Dendritic cell treated with granulocyte-macrophage colony-stimulating factor and Interleukin-4, amounts not matched to agents 40 ng/mL and 50 ng/mL, for 4 days (primary cell): ENCODE measurements at regions of chr2 and their contacts with region 1.

Region 1: GRCh38 chr2:27489498-27490397 is at the start of gene IFT172:
- H3K4me3 Mint-ChIP-seq: peak within 1 kb of the TSS; percentile 80
- H3K27ac Mint-ChIP-seq: peak within 1 kb of the TSS; percentile 76
- H3K4me1 Mint-ChIP-seq: peaks cover 28% of the 10 kb centered on the region
- H3K27me3 Mint-ChIP-seq: peaks cover 26% of the 10 kb centered on the region

Region 2: DNA sequence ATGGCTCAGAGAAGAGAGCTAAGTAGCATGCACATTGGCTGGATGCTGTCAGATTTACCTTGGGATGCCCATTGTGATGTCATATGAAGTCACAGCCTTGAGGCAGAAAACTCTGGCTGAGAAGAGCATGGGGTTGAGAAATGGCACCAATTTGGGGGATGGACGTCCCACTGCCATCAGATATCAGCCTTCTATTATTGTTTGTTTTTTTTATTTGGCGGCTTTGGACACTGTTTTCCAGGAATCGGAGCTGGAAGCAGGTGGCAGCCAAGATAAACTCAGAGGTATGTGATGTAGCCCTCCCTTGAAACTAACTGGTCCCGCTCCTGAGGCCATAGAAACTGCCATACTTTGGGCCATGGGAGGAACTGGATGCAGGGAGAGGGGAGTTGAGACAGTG is 47.5 kb after region 1 on chr2:
- intact Hi-C with region 1: no loop called
- H3K4me3 Mint-ChIP-seq: no peak overlapping the region
- H3K27ac Mint-ChIP-seq: no peak overlapping the region
- H3K4me1 Mint-ChIP-seq: no peaks in the 10 kb centered on the region
- H3K27me3 Mint-ChIP-seq: peaks cover 8% of the 10 kb centered on the region

Region 3: GRCh38 chr2:27582695-27583389 is 93.1 kb after region 1 on chr2 and contains the start of gene ZNF512:
- intact Hi-C with region 1: loop called (anchors 2 kb)
- H3K4me3 Mint-ChIP-seq: peak within 1 kb of the TSS; percentile 93
- H3K27ac Mint-ChIP-seq: peak within 1 kb of the TSS; percentile 91
- H3K4me1 Mint-ChIP-seq: peaks cover 42% of the 10 kb centered on the region
- H3K27me3 Mint-ChIP-seq: no peaks in the 10 kb centered on the region